Sciatic nerve (tissue), 2 donors: ENCODE measurements at regions of chr6 and their contacts with region 1.

Region 1: GRCh38 chr6:110067837-110068591 is 89.9 kb downstream of the GPR6 start:
- DNase-seq: no peak
- ATAC-seq: no peak

Region 2: DNA sequence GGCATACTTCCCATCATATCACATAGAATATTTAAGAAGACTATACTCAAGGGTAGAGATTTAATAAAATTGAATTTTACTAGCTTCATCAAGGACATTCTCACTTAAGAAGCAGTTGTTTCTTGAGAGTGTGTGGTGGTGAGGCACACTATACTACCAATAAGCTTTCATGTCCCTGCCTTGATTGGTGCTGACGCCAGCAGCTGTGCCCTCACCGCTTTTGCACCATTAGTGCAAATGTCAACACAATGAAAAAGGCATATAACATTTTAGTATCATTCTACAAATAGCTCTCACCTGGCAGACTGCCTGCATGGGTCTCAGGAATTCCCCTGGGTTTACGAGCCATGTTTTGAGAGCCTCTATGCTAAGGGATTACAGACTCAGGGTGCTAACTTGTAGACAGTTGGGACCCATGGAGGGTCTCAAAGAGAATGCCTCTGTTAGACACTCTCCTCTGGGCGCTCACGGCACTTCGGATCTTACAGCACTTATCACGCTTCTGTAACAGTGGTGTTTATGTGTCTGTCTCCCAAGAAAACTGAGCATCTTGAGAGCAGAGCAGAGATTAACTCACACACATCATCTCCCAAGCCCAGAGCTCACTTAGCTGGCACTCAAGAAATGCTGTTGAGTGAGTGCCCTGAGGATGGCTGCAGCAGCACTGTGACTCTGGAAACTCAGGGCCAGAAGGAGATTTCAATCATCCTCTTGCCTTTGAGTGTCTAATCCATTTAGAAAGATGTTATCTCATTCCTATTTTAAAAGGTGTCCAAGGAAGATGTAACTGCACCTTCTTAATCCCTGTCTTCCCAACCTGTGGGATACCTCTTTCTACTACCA is 233.2 kb before region 1 on chr6:
- intact Hi-C with region 1: no loop called
- DNase-seq: no peak
- ATAC-seq: no peak

Region 3: DNA sequence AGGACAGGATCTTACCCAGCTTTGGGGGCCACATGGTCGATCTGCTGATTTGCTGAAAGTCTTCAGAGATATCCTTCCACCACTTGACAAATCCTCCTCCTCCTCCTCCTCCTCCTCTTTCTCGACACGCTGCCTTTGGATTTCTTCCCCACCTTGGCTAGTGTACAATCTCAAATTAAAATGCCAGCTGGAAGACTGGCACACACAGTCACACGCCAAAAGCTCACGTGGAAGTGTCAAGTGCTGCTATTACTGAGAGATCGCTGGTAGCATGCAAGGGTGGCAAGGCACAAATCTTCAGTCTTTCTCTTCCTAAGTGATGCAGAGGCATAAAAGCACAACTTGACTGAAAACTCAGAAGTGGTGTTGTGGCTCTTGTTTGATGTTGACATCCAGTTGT is 54.6 kb before region 1 on chr6:
- intact Hi-C with region 1: loop called (anchors 2 kb)
- DNase-seq: no peak
- ATAC-seq: no peak

Region 4: GRCh38 chr6:110053395-110054240 is 14.4 kb before region 1 on chr6:
- intact Hi-C with region 1: no loop called
- DNase-seq: no peak
- ATAC-seq: peak; percentile 76

Region 5: GRCh38 chr6:110185879-110186278 is 117.9 kb after region 1 on chr6:
- intact Hi-C with region 1: no loop called
- DNase-seq: no peak
- ATAC-seq: no peak